ENCODE measurements at regions of chr13 and their contacts with region 1.

Region 1: DNA sequence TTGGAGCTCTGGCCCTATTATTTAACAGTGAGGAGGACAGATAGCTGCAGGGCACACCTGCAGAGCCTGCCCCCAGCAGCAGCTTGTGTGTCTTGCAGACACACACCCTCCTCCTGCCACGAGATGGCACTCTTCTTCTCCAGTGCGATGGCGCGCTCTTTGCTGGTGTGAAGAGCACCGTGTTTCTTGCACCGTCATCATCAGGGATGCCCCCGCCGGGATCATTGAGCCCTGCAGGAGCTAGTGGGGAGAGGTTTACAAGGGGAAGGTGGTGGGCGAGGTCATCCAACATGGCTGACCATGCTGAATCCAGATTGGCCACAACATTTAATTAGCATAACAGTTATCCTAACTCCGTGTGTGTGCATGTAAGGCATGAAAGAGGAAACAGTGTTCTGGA is 105.6 kb downstream of the RAB20 start:
- DNase-seq: peak; percentile 84 to 88 (median 85)
- ATAC-seq: peak; percentile 99
- H3K4me3 ChIP-seq: no peak overlapping the region
- H3K27ac ChIP-seq: no peak overlapping the region
- H3K4me1 ChIP-seq: peaks cover 6 to 17% of the 10 kb centered on the region in 2 experiments; a peak in 4 of 5 replicates
- H3K27me3 ChIP-seq: peaks cover 2% of the 10 kb centered on the region in 2 experiments; a peak in 3 of 5 replicates
- CTCF ChIP-seq: peak; percentile 89 to 96 (median 91)
- EP300 ChIP-seq: no peak
- POLR2A ChIP-seq: no peak
- RAD21 ChIP-seq: peak; percentile 88 to 95

Region 2: DNA sequence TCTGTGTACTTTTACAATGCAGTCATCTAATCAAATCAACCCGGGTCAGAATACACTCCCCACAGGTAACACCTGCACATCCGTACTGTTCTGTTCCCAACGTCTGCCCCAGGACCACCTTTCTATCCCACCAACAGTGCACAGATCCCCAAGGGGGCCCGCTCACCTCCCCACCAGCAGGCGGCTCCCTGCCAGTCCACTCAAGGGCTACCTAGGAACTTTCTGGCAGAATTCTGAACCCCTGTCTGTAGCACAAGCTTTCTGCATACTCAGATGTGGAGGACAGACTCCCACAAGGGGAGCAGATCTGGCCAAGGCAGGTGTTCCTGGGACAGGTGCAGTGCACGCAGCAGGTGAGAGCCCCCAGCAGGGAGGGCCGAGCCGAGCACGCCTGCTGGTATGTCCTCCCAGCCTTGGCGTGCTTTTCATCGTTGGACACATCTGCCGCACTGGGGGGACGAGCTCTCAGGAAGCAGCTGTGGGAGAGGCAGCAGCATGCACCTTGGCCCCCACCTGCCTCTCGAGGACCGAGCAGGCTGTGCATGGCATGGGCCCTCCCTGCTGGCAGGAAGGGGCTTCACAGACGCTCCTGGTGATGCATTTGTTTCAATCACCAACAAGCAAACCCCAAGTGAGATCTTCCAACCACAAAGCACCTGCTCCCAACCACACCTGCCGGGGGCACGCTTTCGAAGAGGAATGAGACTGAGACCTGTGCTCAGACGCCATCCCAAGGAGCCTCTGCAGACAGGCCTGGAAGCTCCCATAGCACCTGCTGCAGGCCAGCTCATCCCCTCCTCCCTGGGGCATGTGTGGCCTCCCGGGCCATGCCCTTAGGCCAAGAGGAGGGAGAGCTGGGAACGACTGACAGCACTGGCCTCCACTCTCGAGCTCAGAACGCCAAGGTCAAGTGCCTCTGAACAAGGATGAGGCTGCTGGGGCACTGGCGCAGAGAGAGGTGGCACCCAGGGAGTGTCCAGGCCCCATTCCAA is 69.7 kb after region 1 on chr13:
- CTCF ChIA-PET with region 1: no interaction called
- POLR2A ChIA-PET with region 1: no interaction called
- in situ Hi-C with region 1: no loop called
- intact Hi-C with region 1: loop called (anchors 5 kb)
- DNase-seq: no peak
- ATAC-seq: peak; percentile 31; the same call in 2 of the 3 replicates
- H3K4me3 ChIP-seq: no peak overlapping the region
- H3K27ac ChIP-seq: no peak overlapping the region
- H3K4me1 ChIP-seq: peaks cover 13 to 25% of the 10 kb centered on the region in 2 experiments; a peak in 4 of 5 replicates
- H3K27me3 ChIP-seq: no peaks in the 10 kb centered on the region
- CTCF ChIP-seq: no peak
- EP300 ChIP-seq: no peak
- POLR2A ChIP-seq: no peak
- RAD21 ChIP-seq: no peak

Region 3: DNA sequence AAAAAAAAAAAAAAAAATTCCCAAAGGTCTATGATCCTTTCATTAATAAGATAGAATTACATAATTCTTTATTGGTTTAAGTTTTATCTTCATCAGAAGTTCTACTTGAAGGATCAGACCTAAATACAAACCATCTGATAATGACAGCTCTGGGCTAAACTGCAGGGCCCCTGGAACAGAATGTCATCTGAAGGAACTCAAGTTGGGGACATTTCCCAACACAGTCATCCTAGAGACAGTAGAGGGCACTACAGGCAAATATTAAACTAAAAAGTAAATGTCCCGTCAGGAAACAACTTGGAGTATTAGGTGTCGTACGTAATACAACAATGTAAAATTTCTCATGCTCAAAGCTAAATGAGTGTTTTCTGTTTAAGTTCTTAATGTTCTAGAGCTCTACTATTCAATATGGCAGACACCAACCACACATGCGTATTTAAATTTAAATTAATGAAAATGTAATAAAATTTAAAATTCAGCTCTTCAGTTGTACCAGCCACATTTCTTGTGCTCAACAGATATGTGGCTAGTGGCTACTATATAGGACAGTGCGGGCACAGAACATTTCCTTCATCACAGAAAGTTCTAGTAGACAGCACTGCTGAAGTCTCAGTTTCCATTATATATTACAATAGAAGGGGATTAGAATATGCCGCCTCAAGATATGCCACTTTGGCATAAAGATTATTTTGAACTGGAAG is 137.6 kb after region 1 on chr13:
- CTCF ChIA-PET with region 1: no interaction called
- POLR2A ChIA-PET with region 1: no interaction called
- in situ Hi-C with region 1: no loop called
- intact Hi-C with region 1: loop called (anchors 1 kb)
- DNase-seq: peak; percentile 32 to 77 (median 52)
- ATAC-seq: peak; percentile 96
- H3K4me3 ChIP-seq: no peak overlapping the region
- H3K27ac ChIP-seq: no peak overlapping the region
- H3K4me1 ChIP-seq: peaks cover 7% of the 10 kb centered on the region in 2 experiments; a peak in 4 of 5 replicates
- H3K27me3 ChIP-seq: no peaks in the 10 kb centered on the region
- CTCF ChIP-seq: peak; percentile 45 to 72 (median 52); a peak in 5 of 6 replicates
- EP300 ChIP-seq: 0 out of 2 replicates have a peak, but pooled peaks have one; percentile 6
- POLR2A ChIP-seq: no peak
- RAD21 ChIP-seq: peak; percentile 79

Region 4: DNA sequence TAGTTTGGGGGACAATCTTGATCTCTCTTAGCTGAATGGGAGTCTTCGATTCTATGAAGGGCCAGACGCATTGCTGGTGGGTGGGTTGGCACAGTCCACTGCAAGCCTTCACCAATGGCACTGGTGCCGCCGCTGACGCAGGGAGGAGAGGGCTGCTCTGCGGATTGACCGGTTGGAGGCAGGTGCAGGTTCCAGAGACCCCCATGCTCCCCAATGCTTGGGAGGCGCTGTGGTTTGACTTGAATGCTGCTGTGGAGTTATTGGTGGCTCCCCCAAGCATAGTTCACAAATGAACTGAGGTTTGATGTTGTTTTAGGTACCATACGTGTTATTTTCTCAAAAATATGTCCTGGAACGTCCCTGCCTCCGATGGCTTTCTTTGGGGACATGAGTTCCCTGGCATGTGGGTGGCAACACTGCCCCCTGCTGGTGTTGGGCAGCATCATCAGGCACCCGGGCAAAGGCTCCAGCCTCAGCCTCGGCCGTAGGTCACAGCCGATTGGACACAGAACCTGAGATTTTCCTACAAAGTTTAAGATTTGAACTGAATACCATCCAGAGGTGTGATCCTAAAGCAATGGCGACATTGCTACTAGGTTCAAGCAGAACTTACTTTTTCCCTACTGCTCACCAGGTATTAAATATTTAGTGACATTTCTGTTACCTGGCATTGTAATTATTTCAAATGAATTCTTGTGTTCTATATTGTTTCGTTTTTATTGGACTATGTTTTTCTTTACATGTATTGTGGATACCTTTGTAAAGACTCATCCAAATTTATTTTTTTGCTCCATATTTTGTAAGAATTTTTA is 363.5 kb after region 1 on chr13:
- CTCF ChIA-PET with region 1: interaction called, 4 read pairs
- POLR2A ChIA-PET with region 1: no interaction called
- in situ Hi-C with region 1: loop called (anchors 10 kb)
- intact Hi-C with region 1: loop called (anchors 1 kb)
- DNase-seq: peak; percentile 81 to 86 (median 84)
- ATAC-seq: peak; percentile 95
- H3K4me3 ChIP-seq: no peak overlapping the region
- H3K27ac ChIP-seq: no peak overlapping the region
- H3K4me1 ChIP-seq: peaks cover 0 to 3% of the 10 kb centered on the region in 2 experiments; a peak in 2 of 5 replicates
- H3K27me3 ChIP-seq: peaks cover 0 to 6% of the 10 kb centered on the region in 2 experiments; a peak in 2 of 5 replicates
- CTCF ChIP-seq: peak; percentile 84 to 92 (median 87)
- EP300 ChIP-seq: no peak
- POLR2A ChIP-seq: no peak
- RAD21 ChIP-seq: peak; percentile 82 to 89